Activated naive CD4-positive, alpha-beta T cell treated with anti-CD3 and anti-CD28 coated beads for 36 hours (primary cell): ENCODE measurements at regions of chr1 and their contacts with region 1.

Region 1: GRCh38 chr1:225454733-225455132 is 26.9 kb upstream of the LBR start:
- DNase-seq: peak; percentile 89
- H3K4me3 Mint-ChIP-seq: peak overlapping the region; percentile 25
- H3K27ac Mint-ChIP-seq: peak overlapping the region; percentile 82
- H3K4me1 Mint-ChIP-seq: peaks cover 30% of the 10 kb centered on the region
- H3K27me3 Mint-ChIP-seq: no peaks in the 10 kb centered on the region

Region 2: DNA sequence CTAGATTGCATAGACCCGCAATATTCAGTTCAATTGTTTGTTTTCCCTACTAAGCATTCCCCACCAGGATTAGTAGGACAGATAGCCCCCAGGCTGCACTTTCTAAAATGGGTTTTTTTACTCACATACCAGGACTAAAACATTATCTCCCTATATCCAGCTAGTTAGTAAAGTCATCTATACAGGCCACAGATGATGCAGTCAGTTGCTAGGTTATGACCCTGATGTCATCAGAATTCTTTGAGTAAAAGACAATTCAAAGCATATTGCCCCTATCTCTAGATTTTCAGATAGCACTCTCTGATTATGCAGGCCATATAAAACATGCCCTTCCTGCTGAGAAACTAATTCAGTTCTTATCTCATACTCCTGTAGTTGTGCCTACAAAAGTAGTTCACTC is 230.4 kb before region 1 on chr1:
- CTCF ChIA-PET with region 1: no interaction called
- intact Hi-C with region 1: no loop called
- DNase-seq: no peak
- H3K4me3 Mint-ChIP-seq: no peak overlapping the region
- H3K27ac Mint-ChIP-seq: no peak overlapping the region
- H3K4me1 Mint-ChIP-seq: no peaks in the 10 kb centered on the region
- H3K27me3 Mint-ChIP-seq: no peaks in the 10 kb centered on the region

Region 3: GRCh38 chr1:225441314-225442122 is 13.2 kb before region 1 on chr1:
- CTCF ChIA-PET with region 1: interaction called, 8 read pairs
- intact Hi-C with region 1: loop called (anchors 1 kb)
- DNase-seq: no peak
- H3K4me3 Mint-ChIP-seq: peak overlapping the region; percentile 12
- H3K27ac Mint-ChIP-seq: peak overlapping the region; percentile 36
- H3K4me1 Mint-ChIP-seq: peaks cover 51% of the 10 kb centered on the region
- H3K27me3 Mint-ChIP-seq: no peaks in the 10 kb centered on the region

Region 4: GRCh38 chr1:225592362-225593025 is 137.8 kb after region 1 on chr1:
- CTCF ChIA-PET with region 1: no interaction called
- intact Hi-C with region 1: no loop called
- DNase-seq: no peak
- H3K4me3 Mint-ChIP-seq: no peak overlapping the region
- H3K27ac Mint-ChIP-seq: no peak overlapping the region
- H3K4me1 Mint-ChIP-seq: no peaks in the 10 kb centered on the region
- H3K27me3 Mint-ChIP-seq: peaks cover 4% of the 10 kb centered on the region